Activated naive CD4-positive, alpha-beta T cell treated with anti-CD3 and anti-CD28 coated beads for 36 hours (primary cell): ENCODE measurements at regions of chr9 and their contacts with region 1.

Region 1: GRCh38 chr9:128067876-128068613 is at the start of gene SLC25A25:
- DNase-seq: peak; percentile 100
- H3K4me3 Mint-ChIP-seq: no peak within 1 kb of the TSS
- H3K27ac Mint-ChIP-seq: peak within 1 kb of the TSS; percentile 86
- H3K4me1 Mint-ChIP-seq: peaks cover 56% of the 10 kb centered on the region
- H3K27me3 Mint-ChIP-seq: no peaks in the 10 kb centered on the region
- total RNA-seq, gene SLC25A25: 12.0 to 12.7 TPM

Region 2: DNA sequence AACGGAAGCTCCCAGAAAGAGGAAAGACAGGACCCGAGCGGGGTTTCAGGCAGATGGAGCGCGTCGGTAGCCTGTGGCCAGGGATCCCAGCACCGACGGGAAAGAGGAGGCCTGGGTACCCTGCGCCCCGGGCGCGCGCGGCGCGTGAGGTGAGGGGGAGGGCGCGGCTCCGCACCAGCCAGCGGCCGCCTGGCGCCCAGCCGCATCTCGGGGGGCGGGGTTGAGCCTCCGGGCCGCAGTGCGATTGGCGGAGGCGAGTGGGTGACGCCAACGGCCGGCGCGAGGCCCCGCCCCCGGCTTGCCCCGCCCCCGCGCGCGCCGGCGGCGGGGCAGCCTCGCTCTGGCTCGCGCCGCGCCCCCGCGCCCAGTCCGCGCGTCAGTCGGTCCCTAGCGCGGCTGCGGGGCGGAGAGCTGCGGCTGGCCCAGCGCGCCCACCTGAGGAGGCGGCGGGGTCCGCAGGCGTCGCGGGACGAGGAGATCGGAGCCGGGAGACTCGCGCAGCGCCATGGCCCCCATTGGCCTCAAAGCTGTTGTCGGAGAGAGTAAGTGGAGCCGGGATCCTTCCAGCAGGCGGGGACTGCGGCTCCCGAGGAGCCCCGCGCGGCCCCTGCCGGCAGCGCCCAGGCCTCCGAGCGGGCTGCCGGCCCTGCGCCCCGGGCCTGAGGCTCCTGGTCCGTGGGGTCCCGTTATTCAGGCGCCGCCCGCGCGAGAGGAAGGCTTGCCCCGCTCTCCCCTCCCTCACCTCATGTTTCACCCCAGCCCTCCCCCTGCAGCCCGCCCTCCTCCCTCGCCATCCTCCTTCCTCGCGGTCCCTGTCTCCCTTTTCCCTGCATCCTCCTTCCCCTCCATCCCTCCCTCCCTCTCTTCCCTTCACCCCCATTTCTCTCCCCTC is 455.9 kb before region 1 on chr9 and contains the start of gene STXBP1:
- CTCF ChIA-PET with region 1: no interaction called
- intact Hi-C with region 1: loop called (anchors 2 kb)
- DNase-seq: peak; percentile 86
- H3K4me3 Mint-ChIP-seq: peak within 1 kb of the TSS; percentile 94
- H3K27ac Mint-ChIP-seq: no peak within 1 kb of the TSS
- H3K4me1 Mint-ChIP-seq: peaks cover 21% of the 10 kb centered on the region
- H3K27me3 Mint-ChIP-seq: peaks cover 15% of the 10 kb centered on the region
- total RNA-seq, gene STXBP1: 17.4 to 17.8 TPM

Region 3: GRCh38 chr9:127955294-127956035 is 112.6 kb before region 1 on chr9:
- CTCF ChIA-PET with region 1: no interaction called
- intact Hi-C with region 1: loop called (anchors 1 kb)
- DNase-seq: peak; percentile 96
- H3K4me3 Mint-ChIP-seq: peak overlapping the region; percentile 10
- H3K27ac Mint-ChIP-seq: peak overlapping the region; percentile 95
- H3K4me1 Mint-ChIP-seq: peaks cover 96% of the 10 kb centered on the region
- H3K27me3 Mint-ChIP-seq: no peaks in the 10 kb centered on the region

Region 4: DNA sequence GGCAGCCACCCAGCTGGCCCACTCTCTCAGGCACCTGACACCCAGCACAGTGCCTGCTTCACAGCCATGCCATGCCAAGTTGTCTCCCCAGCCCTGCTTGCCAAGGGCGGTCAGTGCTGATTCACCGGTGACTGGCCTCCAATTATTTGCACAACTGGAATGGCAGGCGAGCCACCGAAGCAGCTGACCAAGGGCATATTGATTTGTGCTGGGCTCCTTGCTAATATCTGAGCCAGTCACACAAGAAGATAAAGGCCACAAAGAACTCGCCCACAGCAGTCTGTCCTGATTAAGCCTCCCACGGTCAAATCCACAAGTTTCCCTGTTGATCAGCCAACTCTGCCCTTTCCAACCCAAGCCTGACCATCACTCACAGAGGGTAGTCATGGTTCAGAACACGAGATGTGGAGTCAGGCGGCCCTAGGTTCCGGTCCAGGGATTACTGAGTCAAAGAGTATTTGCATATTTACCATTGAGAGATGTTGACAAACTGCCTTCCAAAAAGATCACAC is 80.9 kb before region 1 on chr9:
- CTCF ChIA-PET with region 1: no interaction called
- intact Hi-C with region 1: no loop called
- DNase-seq: no peak
- H3K4me3 Mint-ChIP-seq: no peak overlapping the region
- H3K27ac Mint-ChIP-seq: no peak overlapping the region
- H3K4me1 Mint-ChIP-seq: peaks cover 46% of the 10 kb centered on the region
- H3K27me3 Mint-ChIP-seq: no peaks in the 10 kb centered on the region

Region 5: DNA sequence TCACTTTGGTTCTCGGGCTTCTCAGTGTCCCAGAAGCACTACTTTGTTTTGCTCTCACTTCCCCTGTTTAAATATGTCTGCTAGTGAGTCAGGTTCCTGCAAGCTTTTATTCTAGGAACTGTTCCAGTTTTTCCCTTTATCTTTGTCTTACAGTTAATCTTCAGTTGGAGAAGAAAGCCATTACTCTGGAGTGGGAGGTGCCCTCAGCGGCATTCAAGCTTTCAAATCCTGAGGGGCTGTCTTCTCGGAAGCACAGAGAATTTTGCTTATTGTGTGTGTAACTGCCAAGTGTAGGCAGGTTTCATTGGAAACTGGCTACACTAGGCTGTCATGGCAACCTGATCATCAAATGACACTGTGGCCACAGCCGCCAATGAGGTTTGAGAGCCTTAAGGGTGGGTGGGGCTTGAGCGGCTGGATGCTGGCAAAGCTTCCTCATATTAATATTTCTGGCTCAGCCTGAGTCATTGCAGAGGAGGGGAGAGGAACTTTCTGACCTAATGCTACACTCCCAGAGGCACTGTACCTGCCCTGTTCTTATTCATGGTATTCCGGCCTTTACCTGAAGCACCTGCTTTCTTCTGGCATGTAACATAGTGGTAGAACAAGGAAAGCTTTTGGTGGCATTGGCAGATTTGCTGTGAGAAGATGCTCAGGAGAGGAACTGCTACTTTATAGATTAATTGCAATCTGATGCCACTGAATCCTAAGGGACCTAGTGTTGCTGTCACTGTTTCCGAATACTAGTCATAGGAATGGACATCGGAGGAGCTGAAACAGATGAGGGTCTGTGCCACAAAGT is 26.3 kb after region 1 on chr9:
- CTCF ChIA-PET with region 1: interaction called, 4 read pairs
- intact Hi-C with region 1: loop called (anchors 1 kb)
- DNase-seq: peak; percentile 91
- H3K4me3 Mint-ChIP-seq: peak overlapping the region; percentile 65
- H3K27ac Mint-ChIP-seq: peak overlapping the region; percentile 95
- H3K4me1 Mint-ChIP-seq: peaks cover 87% of the 10 kb centered on the region
- H3K27me3 Mint-ChIP-seq: no peaks in the 10 kb centered on the region

Region 6: DNA sequence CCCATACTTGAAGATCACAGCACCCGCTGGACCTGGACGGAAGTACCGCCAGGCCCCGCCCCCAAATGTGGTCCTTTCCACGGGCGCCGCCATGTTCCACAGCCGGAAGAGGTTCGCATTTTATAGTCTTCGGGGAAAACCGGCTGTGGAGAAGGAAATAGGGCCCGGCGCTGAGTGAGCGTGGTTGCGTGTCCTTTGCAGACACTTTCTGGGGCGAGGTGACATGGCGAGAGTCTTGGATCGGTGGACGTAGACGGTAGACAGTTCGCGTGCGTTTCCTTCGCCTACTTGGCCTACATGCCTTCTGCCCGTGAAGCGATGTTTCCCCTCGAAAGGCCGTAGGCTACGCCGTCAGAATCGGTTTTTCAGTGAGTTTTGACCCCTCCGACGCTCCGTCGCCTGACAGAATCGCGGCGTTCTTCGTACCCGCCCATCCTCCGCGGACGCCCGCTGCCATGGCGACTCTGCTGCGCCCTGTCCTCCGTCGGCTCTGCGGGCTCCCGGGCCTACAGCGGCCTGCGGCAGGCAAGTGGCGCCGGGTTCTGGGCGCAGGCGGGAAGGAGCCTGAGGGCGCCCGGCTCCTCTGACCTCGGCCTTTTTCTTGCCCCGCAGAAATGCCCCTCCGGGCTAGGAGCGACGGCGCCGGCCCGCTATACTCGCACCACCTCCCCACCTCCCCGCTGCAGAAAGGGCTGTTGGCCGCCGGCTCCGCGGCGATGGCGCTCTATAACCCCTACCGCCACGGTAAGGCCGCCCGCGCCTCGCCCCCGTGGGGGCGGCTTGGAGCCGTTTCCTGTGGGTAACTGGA is 254.6 kb after region 1 on chr9 and contains the starts of genes COQ4 and TRUB2:
- CTCF ChIA-PET with region 1: no interaction called
- intact Hi-C with region 1: loop called (anchors 2 kb)
- DNase-seq: peak; percentile 95
- H3K4me3 Mint-ChIP-seq: peak within 1 kb of the TSS; percentile 90
- H3K27ac Mint-ChIP-seq: peak within 1 kb of the TSS; percentile 94
- H3K4me1 Mint-ChIP-seq: peaks cover 22% of the 10 kb centered on the region
- H3K27me3 Mint-ChIP-seq: no peaks in the 10 kb centered on the region
- total RNA-seq, gene COQ4: 27.8 to 29.6 TPM
- total RNA-seq, gene TRUB2: 28.0 to 29.4 TPM